Natural killer cell (primary cell): ENCODE measurements at regions of chr1 and their contacts with region 1.

Region 1: DNA sequence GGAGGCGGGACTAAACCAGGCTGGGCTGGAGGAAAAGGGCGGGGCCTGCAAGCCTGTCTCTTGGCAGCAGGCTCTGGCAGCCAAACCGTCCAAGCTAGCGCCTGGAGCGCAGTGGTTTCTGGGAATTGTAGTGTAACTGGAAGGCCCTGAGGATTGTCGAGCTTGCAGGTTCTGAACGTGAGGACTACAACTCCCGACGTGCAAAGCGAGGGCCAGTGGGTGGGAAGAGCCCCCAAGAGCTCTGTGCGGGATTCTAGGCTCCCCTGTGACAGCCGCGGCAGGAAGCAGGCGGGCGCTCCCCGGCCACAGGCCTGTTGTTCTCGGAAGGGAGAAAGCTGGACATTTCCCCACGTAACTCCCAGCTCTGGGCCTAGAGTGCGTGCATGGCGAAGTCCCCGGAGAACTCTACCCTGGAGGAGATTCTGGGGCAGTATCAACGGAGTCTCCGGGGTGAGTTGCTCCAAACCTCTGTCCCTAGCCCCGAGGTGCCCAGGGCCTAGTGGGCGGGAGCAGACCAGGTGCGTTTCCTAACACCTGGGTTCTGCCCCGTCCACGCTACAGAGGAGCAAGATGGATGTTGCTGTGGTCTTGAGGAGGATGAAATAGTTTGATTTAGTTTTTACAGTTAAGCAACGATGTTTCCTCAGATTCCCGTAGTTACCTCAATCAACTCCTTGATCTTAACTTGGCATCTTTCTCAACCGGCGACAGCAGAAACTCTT is at the start of gene SDCCAG8:
- DNase-seq: peak; percentile 85 to 98
- ATAC-seq: peak; percentile 80 to 92 (median 82)
- H3K4me3 ChIP-seq: peak within 1 kb of the TSS; percentile 83
- H3K4me3 Mint-ChIP-seq: peak within 1 kb of the TSS; percentile 99
- H3K27ac ChIP-seq: peak within 1 kb of the TSS; percentile 89
- H3K27ac Mint-ChIP-seq: peak within 1 kb of the TSS; percentile 97 to 98
- H3K4me1 ChIP-seq: peaks cover 18% of the 10 kb centered on the region
- H3K4me1 Mint-ChIP-seq: peaks cover 24 to 35% of the 10 kb centered on the region in 2 donors
- H3K27me3 ChIP-seq: no peaks in the 10 kb centered on the region
- H3K27me3 Mint-ChIP-seq: no peaks in the 10 kb centered on the region
- CTCF ChIP-seq: no peak
- total RNA-seq, gene SDCCAG8: 17.8 to 28.3 (median 21.2) TPM

Region 2: DNA sequence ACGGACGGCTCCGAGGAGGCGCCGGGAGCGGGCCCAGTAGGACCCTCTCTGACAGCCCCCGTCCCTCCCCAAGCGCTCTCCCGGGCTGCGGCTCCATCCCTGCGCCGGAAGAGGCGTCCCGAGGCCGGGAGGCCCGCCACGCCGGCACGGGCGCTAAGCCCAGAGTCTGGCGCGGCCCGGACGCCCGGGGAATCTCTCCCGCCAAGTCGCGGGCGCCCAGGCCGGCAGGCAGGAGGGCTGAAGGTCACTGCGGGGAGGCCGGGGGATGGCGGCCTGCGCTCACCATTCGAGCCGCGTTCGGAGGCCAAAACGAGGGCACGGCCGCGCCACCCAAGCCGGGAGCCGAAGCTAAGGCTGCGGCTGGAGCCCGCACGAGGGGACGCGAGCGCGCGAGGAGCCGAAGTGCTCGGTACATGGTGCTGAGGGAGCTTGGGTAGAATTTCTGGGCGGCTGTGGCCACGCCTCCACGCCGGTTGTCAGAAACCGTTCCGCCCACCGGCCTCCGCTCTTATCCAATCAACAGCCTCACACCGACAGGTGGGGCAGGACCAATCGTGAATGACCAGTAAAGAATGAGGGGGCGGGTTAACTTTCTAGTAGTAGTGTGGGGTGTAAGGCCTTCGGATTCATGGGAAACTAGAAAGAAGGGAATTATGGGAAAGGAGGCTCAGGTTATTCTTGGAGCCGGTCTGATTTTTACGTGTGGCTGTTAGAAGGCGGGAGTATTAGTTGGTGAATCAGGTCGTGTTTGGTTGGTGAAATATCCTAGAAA is 1736.5 kb before region 1 on chr1 and contains the start of gene FH:
- intact Hi-C with region 1: loop called (anchors 10 kb)
- DNase-seq: peak; percentile 90 to 98
- ATAC-seq: peak; percentile 97 to 100 (median 97)
- H3K4me3 ChIP-seq: peak within 1 kb of the TSS; percentile 46
- H3K4me3 Mint-ChIP-seq: peak within 1 kb of the TSS; percentile 89
- H3K27ac ChIP-seq: peak within 1 kb of the TSS; percentile 63
- H3K27ac Mint-ChIP-seq: peak within 1 kb of the TSS in 1 of 2 donors; percentile 49
- H3K4me1 ChIP-seq: no peaks in the 10 kb centered on the region
- H3K4me1 Mint-ChIP-seq: peaks cover 5 to 11% of the 10 kb centered on the region in 2 donors
- H3K27me3 ChIP-seq: peaks cover 2% of the 10 kb centered on the region
- H3K27me3 Mint-ChIP-seq: peaks cover 22 to 27% of the 10 kb centered on the region in 2 donors
- CTCF ChIP-seq: no peak
- total RNA-seq, gene FH: 16.6 to 18.3 (median 16.7) TPM

Region 3: DNA sequence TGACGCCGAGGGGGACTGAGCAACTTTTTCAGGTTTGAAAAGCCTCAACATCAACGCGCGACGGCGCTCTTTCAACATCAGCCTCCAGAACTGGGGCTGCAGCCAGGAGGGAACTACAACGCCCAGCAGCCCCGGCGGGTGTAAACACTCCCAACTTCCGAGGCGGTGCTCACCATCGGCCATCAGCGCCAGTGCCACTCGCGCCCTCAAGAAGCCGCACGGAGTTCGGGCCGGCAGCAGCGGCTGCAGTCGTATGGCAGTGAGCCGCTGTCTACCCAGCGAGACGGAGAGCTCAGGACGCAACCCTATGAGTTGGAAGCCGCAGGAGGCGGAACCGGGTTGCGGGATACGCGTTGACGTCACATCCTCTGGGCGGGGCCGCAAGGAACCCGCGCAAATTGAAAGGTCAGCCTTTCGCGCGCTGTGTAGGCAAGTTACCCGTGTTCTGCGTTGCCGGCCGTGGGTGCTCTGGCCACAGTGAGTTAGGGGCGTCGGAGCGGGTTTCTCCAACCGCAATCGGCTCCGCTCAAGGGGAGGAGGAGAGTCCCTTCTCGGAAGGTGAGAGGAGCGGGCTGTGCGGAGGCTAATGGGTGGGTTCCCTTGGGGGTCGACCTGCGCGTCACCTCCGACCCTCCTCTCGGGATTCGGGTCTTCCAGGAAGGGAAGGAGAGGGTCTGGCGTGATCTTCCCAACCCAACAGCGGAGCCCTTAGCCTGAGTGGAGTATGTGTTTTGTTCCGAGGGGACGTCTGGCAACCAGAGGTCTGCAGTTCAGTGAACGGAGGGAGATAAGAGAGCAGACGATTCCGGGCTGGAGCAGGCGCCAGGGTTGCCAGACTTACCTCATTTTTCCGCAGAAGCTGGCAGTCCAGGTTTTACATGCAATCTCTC is 1407.9 kb before region 1 on chr1 and contains the start of gene EXO1:
- intact Hi-C with region 1: loop called (anchors 5 kb)
- DNase-seq: peak; percentile 86 to 94
- ATAC-seq: peak; percentile 97
- H3K4me3 ChIP-seq: peak within 1 kb of the TSS; percentile 97
- H3K4me3 Mint-ChIP-seq: peak within 1 kb of the TSS; percentile 99
- H3K27ac ChIP-seq: peak within 1 kb of the TSS; percentile 99
- H3K27ac Mint-ChIP-seq: peak within 1 kb of the TSS; percentile 98 to 99
- H3K4me1 ChIP-seq: peaks cover 7% of the 10 kb centered on the region
- H3K4me1 Mint-ChIP-seq: peaks cover 16% of the 10 kb centered on the region in 2 donors
- H3K27me3 ChIP-seq: no peaks in the 10 kb centered on the region
- H3K27me3 Mint-ChIP-seq: peaks cover 6 to 10% of the 10 kb centered on the region in 2 donors
- CTCF ChIP-seq: peak; percentile 9
- total RNA-seq, gene EXO1: 1.6 to 2.7 (median 1.7) TPM

Region 4: GRCh38 chr1:243850452-243851256 is 594.7 kb after region 1 on chr1:
- intact Hi-C with region 1: loop called (anchors 10 kb)
- DNase-seq: peak; percentile 81 to 90
- ATAC-seq: peak; percentile 42 to 58 (median 52)
- H3K4me3 ChIP-seq: peak overlapping the region; percentile 85
- H3K4me3 Mint-ChIP-seq: peak overlapping the region; percentile 90
- H3K27ac ChIP-seq: peak overlapping the region; percentile 89
- H3K27ac Mint-ChIP-seq: peak overlapping the region; percentile 89 to 99
- H3K4me1 ChIP-seq: peaks cover 10% of the 10 kb centered on the region
- H3K4me1 Mint-ChIP-seq: peaks cover 26 to 30% of the 10 kb centered on the region in 2 donors
- H3K27me3 ChIP-seq: no peaks in the 10 kb centered on the region
- H3K27me3 Mint-ChIP-seq: peaks cover 5 to 8% of the 10 kb centered on the region in 2 donors
- CTCF ChIP-seq: no peak

Region 5: GRCh38 chr1:244325056-244325764 is 1069.3 kb after region 1 on chr1:
- intact Hi-C with region 1: loop called (anchors 2 kb)
- DNase-seq: peak; percentile 45 to 65
- ATAC-seq: peak; percentile 77 to 93 (median 88)
- H3K4me3 ChIP-seq: peak overlapping the region; percentile 61
- H3K4me3 Mint-ChIP-seq: peak overlapping the region; percentile 95
- H3K27ac ChIP-seq: peak overlapping the region; percentile 91
- H3K27ac Mint-ChIP-seq: peak overlapping the region; percentile 96 to 98
- H3K4me1 ChIP-seq: peaks cover 56% of the 10 kb centered on the region
- H3K4me1 Mint-ChIP-seq: peaks cover 56 to 57% of the 10 kb centered on the region in 2 donors
- H3K27me3 ChIP-seq: no peaks in the 10 kb centered on the region
- H3K27me3 Mint-ChIP-seq: no peaks in the 10 kb centered on the region
- CTCF ChIP-seq: no peak

Region 6: GRCh38 chr1:244652699-244653466 is 1396.9 kb after region 1 on chr1 and contains the start of gene DESI2:
- intact Hi-C with region 1: loop called (anchors 1 kb)
- DNase-seq: peak; percentile 96 to 99
- ATAC-seq: peak; percentile 88 to 96 (median 88)
- H3K4me3 ChIP-seq: peak within 1 kb of the TSS; percentile 90
- H3K4me3 Mint-ChIP-seq: peak within 1 kb of the TSS; percentile 77
- H3K27ac ChIP-seq: peak within 1 kb of the TSS; percentile 76
- H3K27ac Mint-ChIP-seq: peak within 1 kb of the TSS in 1 of 2 donors; percentile 75
- H3K4me1 ChIP-seq: peaks cover 14% of the 10 kb centered on the region
- H3K4me1 Mint-ChIP-seq: peaks cover 19 to 22% of the 10 kb centered on the region in 2 donors
- H3K27me3 ChIP-seq: no peaks in the 10 kb centered on the region
- H3K27me3 Mint-ChIP-seq: peaks cover 0 to 4% of the 10 kb centered on the region in 2 donors
- CTCF ChIP-seq: peak; percentile 48
- total RNA-seq, gene DESI2: 24.1 to 30.5 (median 25.4) TPM